ENCODE measurements at regions of chr10 and their contacts with region 1.

Region 1: DNA sequence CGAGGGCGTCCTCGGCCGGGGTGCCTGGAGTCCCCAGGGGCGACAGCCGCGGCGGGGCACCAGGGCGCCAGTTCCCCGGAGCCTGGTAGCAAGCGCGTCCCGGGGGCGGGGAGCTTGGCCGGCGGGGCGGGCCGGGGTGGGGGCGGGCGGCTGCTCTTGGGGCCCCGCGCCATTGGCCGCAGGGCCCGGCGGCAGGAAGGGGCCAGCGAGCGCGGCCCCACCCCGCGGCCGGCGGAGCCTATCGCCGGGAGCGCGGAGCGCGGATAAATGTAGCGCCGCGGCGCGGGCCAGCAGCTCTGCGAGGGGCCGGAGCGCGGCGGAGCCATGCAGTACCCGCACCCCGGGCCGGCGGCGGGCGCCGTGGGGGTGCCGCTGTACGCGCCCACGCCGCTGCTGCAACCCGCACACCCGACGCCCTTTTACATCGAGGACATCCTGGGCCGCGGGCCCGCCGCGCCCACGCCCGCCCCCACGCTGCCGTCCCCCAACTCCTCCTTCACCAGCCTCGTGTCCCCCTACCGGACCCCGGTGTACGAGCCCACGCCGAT is at the start of gene HHEX:
- DNase-seq: peak; percentile 57 to 78
- ATAC-seq: peak; percentile 89
- H3K4me3 ChIP-seq: peak within 1 kb of the TSS; percentile 97
- H3K27ac ChIP-seq: peak within 1 kb of the TSS; percentile 95 to 97
- H3K4me1 ChIP-seq: peaks cover 42% of the 10 kb centered on the region
- CTCF ChIP-seq: no peak; the same call in 2 of the 3 replicates
- EP300 ChIP-seq: no peak
- POLR2A ChIP-seq: peak; percentile 82
- RAD21 ChIP-seq: no peak; a peak in 1 of 5 replicates
- polyA plus RNA-seq, gene HHEX: 25.2 and 28.1 TPM in 2 replicates

Region 2: GRCh38 chr10:92592761-92593618 is 96.7 kb before region 1 on chr10 and contains the start of gene KIF11:
- CTCF ChIA-PET with region 1: interaction called, 3 read pairs
- POLR2A ChIA-PET with region 1: interaction called, 18 read pairs
- DNase-seq: peak; percentile 84 to 97
- ATAC-seq: peak; percentile 78 to 91
- H3K4me3 ChIP-seq: peak within 1 kb of the TSS; percentile 63
- H3K27ac ChIP-seq: peak within 1 kb of the TSS; percentile 95 to 96
- H3K4me1 ChIP-seq: peaks cover 22% of the 10 kb centered on the region
- CTCF ChIP-seq: no peak
- EP300 ChIP-seq: no peak
- POLR2A ChIP-seq: peak; percentile 83
- RAD21 ChIP-seq: no peak
- polyA plus RNA-seq, gene KIF11: 29.3 and 38.7 TPM in 2 replicates

Region 3: DNA sequence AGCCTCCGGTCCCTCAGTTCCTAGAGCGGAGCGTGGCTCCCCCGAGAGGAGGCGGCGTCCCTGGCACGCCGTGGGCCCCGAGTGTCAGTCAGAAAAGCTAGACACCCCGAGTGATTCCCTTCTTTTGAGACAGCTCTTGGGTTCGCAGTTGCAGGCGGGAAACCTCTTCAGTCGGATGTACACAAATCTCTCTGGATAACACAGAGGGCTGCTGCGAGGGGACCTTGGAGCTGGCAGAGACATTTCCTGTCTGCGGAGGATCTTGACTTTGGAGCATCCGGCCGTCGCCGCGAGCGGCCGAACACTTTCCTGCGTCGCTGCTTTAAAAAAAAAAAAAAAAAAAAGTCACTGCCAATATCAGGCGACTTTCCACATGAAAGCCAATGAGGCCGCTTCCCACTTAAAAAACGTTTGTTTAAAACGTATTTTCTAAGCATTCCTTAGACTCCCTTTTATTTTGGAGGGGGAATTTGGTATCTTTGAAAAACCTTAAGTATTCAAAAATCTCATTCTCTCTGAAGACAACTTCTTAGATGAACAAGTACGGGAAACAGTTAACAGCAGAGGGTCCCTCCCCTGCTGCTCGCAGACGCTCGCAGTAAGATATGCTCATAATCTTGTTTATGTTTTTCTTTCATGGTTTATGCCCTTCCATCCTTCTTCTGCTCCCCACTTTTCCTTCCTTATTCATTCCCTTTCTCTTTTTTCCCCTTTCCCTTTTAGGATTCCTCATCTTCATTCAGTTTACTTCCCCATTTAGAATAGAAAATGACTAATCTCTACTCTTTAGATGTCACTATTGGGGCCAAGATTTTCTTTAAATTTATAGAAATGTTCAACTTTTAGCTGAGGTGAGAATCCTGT is 10.0 kb after region 1 on chr10:
- CTCF ChIA-PET with region 1: interaction called, 5 read pairs
- POLR2A ChIA-PET with region 1: interaction called, 16 read pairs
- DNase-seq: peak; percentile 41 to 71
- ATAC-seq: peak; percentile 58 to 61
- H3K4me3 ChIP-seq: peak overlapping the region; percentile 42
- H3K27ac ChIP-seq: peak overlapping the region; percentile 82 to 92
- H3K4me1 ChIP-seq: peaks cover 52% of the 10 kb centered on the region
- CTCF ChIP-seq: no peak
- EP300 ChIP-seq: no peak
- POLR2A ChIP-seq: 0 out of 2 replicates have a peak, but pooled peaks have one; percentile 20
- RAD21 ChIP-seq: no peak; a peak in 1 of 5 replicates

Region 4: GRCh38 chr10:92822060-92822634 is 132.4 kb after region 1 on chr10:
- CTCF ChIA-PET with region 1: no interaction called
- POLR2A ChIA-PET with region 1: interaction called, 10 read pairs
- DNase-seq: peak; percentile 69 to 82
- ATAC-seq: peak; percentile 93 to 97
- H3K4me3 ChIP-seq: no peak overlapping the region
- H3K27ac ChIP-seq: peak overlapping the region; percentile 88 to 94
- H3K4me1 ChIP-seq: peaks cover 35% of the 10 kb centered on the region
- CTCF ChIP-seq: no peak
- EP300 ChIP-seq: peak; percentile 36 to 38; a peak in 1 of 5 replicates
- POLR2A ChIP-seq: no peak
- RAD21 ChIP-seq: peak in 1 of 2 experiments; percentile 25; a peak in 2 of 5 replicates

Region 5: GRCh38 chr10:94264085-94264484 is 1574.3 kb after region 1 on chr10:
- CTCF ChIA-PET with region 1: no interaction called
- POLR2A ChIA-PET with region 1: no interaction called
- DNase-seq: no peak
- ATAC-seq: no peak
- H3K4me3 ChIP-seq: no peak overlapping the region
- H3K27ac ChIP-seq: no peak overlapping the region
- H3K4me1 ChIP-seq: peaks cover 5% of the 10 kb centered on the region; the same call in 1 of the 3 replicates
- CTCF ChIP-seq: no peak
- EP300 ChIP-seq: no peak
- POLR2A ChIP-seq: no peak
- RAD21 ChIP-seq: no peak

Measured in A549 (cell line).